Activated CD4-positive, alpha-beta memory T cell treated with anti-CD3 and anti-CD28 coated beads, Interleukin-2, amount 10 ng/mL, durations not matched to agents 7 days and 5 days (primary cell): ENCODE measurements at regions of chr14 and their contacts with region 1.

Region 1: DNA sequence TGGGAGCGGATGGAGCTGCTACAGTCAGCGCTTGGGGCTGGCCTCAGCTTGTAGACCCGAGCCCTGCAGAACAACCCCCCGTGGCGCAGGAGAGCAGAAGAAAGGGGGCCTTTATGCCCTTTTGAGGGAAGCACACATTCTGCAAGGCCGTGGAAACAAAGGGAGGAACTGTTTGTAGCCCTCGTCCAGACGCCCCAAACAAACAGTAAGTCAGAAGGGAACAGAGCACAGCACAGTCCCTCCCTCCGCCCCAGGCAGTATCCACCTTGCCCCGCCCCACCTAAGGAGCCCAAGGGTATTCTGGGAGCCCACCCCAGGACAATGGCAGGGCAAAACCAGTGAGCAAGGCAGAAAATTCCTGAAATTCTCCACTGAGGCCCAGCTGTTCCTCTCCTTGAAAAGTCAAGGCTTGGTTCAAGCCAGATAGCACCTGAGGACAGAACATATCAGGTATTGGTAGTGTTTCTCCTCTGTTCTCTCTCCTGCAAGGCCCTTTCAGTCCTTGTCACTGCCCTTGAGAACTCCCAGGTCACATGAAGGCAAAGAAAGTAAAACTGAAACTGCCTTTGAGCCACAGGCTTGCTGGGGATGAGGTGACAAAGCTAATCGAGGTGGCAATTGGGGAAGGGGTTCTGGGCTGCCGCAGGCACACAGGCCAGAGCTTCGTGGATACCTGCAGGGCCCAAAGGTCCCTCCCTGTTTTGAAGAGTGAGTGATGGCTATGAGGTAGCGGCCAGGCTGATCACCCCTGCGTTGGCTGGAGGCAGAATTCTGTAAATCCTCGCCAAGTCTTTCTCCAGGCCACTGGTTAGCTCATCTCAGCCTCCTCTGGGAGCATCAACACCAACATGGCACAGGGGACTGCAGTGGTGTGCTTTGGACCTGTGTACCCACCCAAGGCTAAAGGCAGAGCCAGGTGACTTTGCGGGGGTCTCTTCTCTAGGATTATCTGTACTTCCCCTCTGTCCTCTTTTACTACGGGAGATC is 499 bp downstream of the DGLUCY start:
- DNase-seq: peak; percentile 83
- H3K4me3 Mint-ChIP-seq: peak overlapping the region; percentile 94
- H3K27ac Mint-ChIP-seq: peak overlapping the region; percentile 96
- H3K4me1 Mint-ChIP-seq: peaks cover 65% of the 10 kb centered on the region
- H3K27me3 Mint-ChIP-seq: no peaks in the 10 kb centered on the region

Region 2: DNA sequence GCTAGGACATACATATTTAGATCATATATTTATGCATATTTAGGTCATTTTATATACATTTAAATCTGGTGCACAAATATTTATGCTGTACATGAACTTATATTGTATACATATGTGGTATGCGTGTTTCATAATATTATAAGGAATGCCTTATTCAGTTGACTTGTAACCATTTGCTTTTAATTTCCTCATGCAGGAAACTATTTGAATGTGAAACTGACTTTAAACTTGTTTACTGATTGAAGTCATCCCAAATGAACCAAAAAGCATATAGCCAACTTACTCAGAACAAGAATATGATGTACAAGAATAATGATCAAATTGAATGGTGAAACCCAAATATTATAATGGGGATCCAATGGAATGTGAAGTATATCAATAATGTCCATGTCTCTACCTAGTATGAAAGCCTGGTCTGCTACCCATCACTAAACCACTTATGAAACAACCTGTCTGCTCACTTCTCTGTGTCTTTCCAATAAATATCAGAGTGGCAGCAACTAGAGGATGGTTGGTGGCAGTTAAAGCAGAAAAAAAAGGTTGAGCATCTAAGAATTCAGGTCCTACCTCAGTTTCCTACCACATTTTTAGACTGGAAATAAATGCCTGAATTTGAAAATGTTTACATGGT is 92.3 kb before region 1 on chr14:
- CTCF ChIA-PET with region 1: no interaction called
- POLR2A ChIA-PET with region 1: interaction called, 22 read pairs
- DNase-seq: no peak
- H3K4me3 Mint-ChIP-seq: peak overlapping the region; percentile 70
- H3K27ac Mint-ChIP-seq: peak overlapping the region; percentile 91
- H3K4me1 Mint-ChIP-seq: peaks cover 56% of the 10 kb centered on the region
- H3K27me3 Mint-ChIP-seq: no peaks in the 10 kb centered on the region

Region 3: DNA sequence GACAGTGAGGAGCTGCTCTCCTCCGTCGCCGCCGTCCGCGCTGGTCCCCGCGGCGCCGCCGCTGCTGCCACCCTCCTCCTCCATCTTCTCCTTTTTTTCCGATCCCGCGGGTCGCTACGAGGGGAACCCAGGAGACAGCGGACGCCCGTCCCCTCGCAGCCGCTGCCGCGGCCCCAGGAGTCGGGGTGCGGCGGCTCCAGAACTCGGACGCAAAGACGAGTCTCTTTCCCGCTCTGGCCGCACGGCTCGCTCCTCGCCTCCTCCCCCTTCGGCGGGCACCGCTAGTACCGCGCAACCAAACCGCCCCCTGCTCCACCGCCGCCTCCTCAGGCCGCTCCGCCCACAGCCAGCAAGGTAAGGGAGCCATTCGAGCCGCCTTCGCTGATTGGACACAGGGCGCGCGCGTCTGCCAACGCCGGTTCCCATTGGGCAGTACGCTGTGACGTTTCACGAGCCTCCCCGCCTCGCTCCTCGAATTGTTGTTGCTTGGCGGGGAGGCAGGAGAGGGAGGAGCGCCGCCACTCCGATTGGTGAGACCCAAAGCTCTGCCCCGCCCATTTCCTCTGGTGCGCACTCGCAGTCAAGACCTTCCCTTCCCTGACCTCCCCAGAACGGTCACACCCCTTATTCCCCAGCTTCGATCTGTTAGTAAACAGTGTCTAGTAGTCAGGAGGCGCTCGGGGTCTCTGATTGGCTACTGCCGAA is 53.9 kb before region 1 on chr14 and contains the start of gene RPS6KA5:
- CTCF ChIA-PET with region 1: interaction called, 50 read pairs
- POLR2A ChIA-PET with region 1: interaction called, 488 read pairs
- DNase-seq: peak; percentile 100
- H3K4me3 Mint-ChIP-seq: peak within 1 kb of the TSS; percentile 86
- H3K27ac Mint-ChIP-seq: peak within 1 kb of the TSS; percentile 73
- H3K4me1 Mint-ChIP-seq: peaks cover 62% of the 10 kb centered on the region
- H3K27me3 Mint-ChIP-seq: no peaks in the 10 kb centered on the region
- total RNA-seq, gene RPS6KA5: 44.5 to 49.9 TPM

Region 4: DNA sequence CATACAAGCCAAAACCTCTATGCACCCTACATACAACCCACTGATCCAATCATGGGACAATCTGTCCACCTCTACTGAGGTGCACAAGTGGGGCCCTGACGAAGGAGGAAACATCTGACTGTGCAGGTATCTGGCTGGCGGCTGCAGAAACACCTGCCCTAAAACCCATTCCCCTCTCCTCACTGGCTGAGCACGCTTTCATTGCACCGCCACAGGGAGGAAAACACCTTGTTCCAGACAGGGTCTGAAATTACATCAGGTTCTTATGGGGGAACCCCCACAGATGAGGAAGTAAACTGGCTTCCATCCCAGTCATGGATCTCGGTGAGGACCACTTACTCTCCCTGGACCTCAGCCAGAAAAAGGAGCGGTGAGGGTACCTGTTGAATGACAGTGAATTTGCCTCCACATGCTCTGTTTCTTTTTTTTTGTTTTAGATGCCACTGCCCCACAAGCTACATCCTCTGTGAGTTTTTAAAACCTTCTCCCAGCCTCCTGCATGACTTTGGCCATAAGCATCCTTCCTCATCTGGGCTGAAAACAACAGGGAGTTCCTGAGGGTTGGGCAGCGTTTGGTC is 24.3 kb before region 1 on chr14:
- CTCF ChIA-PET with region 1: no interaction called
- POLR2A ChIA-PET with region 1: interaction called, 12 read pairs
- DNase-seq: no peak
- H3K4me3 Mint-ChIP-seq: no peak overlapping the region
- H3K27ac Mint-ChIP-seq: no peak overlapping the region
- H3K4me1 Mint-ChIP-seq: peaks cover 9% of the 10 kb centered on the region
- H3K27me3 Mint-ChIP-seq: no peaks in the 10 kb centered on the region

Region 5: DNA sequence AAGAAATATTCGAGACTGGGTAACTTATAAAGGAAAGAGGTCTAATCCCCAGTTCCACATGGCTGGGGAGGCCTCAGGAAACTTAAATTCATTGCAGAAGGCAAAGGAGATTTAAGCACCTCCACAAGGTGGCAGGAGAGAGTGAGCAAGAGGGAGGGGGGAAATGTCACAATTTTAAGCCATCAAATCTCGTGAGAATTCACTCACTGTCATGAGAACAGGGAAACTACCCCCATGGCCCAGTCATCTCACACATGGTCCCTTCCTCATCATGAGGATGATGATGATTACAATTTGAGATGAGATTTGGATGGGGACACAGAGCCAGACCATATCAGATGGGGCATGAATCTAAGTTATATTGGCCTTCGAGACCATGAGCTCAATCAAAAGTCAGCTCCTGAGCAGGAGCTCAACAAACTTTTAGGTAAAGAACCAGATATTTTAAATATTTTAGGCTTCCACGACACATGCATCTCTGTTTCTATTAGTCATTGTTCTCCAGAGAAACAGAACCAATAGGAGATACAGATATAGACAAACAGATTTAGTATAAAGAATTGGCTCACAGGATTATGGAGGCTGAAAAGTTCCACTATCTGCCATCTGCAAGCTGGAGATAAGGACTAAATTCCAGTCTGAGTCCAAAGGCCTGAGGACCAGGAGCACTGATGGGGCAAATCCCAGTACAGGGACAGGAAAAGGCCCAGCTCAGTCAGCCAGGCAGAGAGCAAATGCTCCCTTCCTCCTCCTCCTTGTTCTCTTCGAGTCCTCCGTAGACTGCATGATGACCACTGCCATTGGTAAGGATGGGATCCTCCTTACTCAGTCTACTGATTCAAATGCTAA is 24.4 kb after region 1 on chr14:
- CTCF ChIA-PET with region 1: interaction called, 4 read pairs
- POLR2A ChIA-PET with region 1: interaction called, 14 read pairs
- DNase-seq: peak; percentile 59
- H3K4me3 Mint-ChIP-seq: no peak overlapping the region
- H3K27ac Mint-ChIP-seq: peak overlapping the region; percentile 41
- H3K4me1 Mint-ChIP-seq: peaks cover 59% of the 10 kb centered on the region
- H3K27me3 Mint-ChIP-seq: no peaks in the 10 kb centered on the region

Region 6: GRCh38 chr14:91202234-91202974 is 88.0 kb after region 1 on chr14:
- CTCF ChIA-PET with region 1: no interaction called
- POLR2A ChIA-PET with region 1: no interaction called
- DNase-seq: peak; percentile 63
- H3K4me3 Mint-ChIP-seq: peak overlapping the region; percentile 37
- H3K27ac Mint-ChIP-seq: peak overlapping the region; percentile 81
- H3K4me1 Mint-ChIP-seq: peaks cover 68% of the 10 kb centered on the region
- H3K27me3 Mint-ChIP-seq: no peaks in the 10 kb centered on the region

Region 7: DNA sequence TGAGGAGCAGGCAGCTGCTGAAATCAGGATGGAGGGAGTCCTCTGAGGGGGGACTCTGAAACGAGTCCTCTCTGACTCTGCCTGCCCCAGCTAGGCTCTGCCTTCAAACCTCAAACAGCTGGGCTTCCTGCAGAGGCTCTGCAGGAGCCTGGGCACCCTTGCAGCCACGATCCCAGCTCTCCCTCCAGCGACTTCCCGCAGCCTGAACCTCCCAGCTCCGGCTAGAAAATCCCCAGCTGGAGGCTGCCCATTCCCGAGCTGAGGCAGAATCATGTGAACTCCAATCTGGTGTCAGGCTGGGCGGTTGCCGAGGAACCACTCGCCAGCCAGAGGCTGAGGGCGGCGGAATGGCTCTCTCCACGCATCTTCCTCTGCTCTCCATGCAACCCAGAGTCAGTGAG is 130.1 kb after region 1 on chr14 and contains the start of gene GPR68:
- CTCF ChIA-PET with region 1: interaction called, 3 read pairs
- POLR2A ChIA-PET with region 1: interaction called, 89 read pairs
- DNase-seq: no peak
- H3K4me3 Mint-ChIP-seq: peak within 1 kb of the TSS; percentile 96
- H3K27ac Mint-ChIP-seq: peak within 1 kb of the TSS; percentile 97
- H3K4me1 Mint-ChIP-seq: peaks cover 82% of the 10 kb centered on the region
- H3K27me3 Mint-ChIP-seq: no peaks in the 10 kb centered on the region
- total RNA-seq, gene GPR68: 36.9 to 39.8 TPM

Region 8: GRCh38 chr14:91332151-91332985 is 218.0 kb after region 1 on chr14:
- CTCF ChIA-PET with region 1: no interaction called
- POLR2A ChIA-PET with region 1: no interaction called
- DNase-seq: no peak
- H3K4me3 Mint-ChIP-seq: no peak overlapping the region
- H3K27ac Mint-ChIP-seq: peak overlapping the region; percentile 72
- H3K4me1 Mint-ChIP-seq: peaks cover 45% of the 10 kb centered on the region
- H3K27me3 Mint-ChIP-seq: no peaks in the 10 kb centered on the region